ENCODE measurements at regions of chr20 and their contacts with region 1.

Region 1: DNA sequence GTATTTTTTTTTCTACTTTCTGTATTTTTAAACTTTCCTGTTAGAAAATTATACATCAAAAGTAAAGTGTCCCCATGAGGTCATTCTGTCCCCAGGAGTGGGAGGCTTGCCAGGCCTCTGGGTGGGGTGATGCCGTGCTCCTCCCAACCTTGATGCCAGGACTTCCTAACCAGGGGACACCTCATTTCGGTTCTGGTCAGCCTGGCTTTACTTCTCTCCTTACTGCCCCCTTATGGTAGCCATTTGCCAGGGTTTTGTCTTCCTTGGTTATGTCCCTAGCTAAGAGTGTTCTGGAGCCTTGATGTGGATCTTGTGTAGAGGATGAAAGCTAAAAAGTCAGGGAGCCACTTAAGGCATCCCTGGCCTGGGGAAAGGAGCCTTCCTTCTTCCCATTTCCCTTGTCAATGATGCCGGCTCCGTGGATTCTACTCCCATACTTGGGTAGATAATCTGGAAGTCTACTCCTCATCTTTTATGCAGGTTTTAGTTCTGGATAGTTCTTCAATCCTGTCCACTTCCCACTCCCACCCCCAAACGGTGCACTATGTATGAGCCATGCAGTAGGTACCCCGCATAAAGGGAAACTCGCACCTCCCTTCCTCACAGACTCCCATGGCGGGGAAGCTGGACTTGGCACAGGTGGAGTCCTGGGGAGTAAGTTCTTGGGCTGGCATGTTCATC is 164.1 kb upstream of the SALL4 start:
- DNase-seq: peak; percentile 77
- H3K4me3 ChIP-seq: no peak overlapping the region
- H3K27ac ChIP-seq: no peak overlapping the region
- H3K4me1 ChIP-seq: no peaks in the 10 kb centered on the region
- H3K27me3 ChIP-seq: no peaks in the 10 kb centered on the region
- CTCF ChIP-seq: peak; percentile 73 to 74
- POLR2A ChIP-seq: no peak

Region 2: DNA sequence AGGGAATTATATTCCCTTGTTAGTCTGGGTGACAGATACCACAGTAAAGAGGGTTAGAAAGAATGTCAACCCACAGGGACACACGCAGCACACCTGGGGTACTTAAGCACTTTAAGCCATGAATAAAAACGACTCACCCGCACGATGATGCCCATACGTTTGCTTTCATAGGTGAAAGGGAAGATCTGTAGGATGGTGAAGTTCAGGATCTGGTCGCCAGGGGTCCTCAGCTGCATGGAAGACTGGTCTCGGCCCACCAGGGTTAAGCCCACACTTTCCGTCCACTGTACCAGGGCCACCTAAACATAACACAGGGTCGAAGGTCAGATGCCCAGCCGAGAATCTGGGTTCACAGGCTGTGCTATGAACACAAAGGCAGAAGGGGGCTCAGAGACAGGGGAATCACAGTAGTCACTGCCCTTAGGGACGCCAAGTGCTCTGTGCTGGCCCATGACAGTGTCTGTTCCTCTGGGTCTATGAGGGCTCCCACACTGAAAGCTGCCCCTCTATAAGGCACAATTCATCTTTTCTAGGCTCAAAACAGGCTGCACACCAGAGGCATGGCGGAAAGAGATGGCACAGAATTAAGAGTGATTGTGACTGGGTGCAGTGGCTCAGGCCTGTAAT is 327.1 kb before region 1 on chr20:
- CTCF ChIA-PET with region 1: interaction called, 11 read pairs
- POLR2A ChIA-PET with region 1: no interaction called
- dilution Hi-C with region 1: no loop called
- intact Hi-C with region 1: loop called (anchors 1 kb)
- DNase-seq: peak; percentile 84
- H3K4me3 ChIP-seq: no peak overlapping the region
- H3K27ac ChIP-seq: no peak overlapping the region
- H3K4me1 ChIP-seq: peaks cover 3% of the 10 kb centered on the region
- H3K27me3 ChIP-seq: no peaks in the 10 kb centered on the region
- CTCF ChIP-seq: peak; percentile 83 to 88
- POLR2A ChIP-seq: no peak

Region 3: DNA sequence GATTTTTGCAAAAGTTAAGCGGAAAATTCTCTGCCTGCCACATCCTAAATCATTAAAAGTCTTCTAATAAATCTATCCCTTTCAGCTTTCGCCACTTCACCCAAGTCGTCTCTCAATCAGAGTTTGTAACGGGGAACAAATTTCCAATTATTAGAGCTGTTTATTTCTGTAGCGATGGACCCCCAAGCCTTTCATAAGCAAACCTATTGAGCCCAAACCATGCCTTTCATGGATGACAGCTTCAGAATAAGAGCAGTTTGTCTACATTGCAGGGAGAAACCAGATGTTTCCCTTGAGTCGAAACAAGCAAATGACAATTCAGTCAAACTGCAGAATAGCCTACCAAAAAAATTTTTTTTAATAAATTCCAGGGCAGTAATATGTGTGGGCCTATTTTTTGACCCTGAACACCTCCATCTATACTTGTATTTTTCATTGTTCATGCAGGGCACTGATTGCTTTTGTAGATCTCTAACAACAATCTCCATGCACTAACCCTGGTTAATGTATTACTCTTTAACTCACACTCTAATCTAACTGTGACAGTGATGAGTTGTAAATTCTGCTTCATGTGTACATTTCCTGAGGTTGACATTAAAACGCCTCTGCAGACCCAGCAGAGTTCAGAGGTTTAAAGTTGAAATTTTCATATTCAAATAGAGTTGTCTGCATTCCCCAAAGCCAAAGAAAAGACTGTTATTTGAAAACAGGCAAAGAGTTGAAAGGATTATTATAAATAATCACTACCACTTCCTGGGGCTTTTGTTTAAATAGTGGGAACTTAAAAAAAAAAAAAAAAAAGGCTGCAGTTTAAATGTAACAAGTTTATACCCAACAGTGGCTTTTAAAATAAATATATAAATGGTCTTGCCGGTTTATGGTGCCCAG is 262.8 kb before region 1 on chr20:
- CTCF ChIA-PET with region 1: interaction called, 30 read pairs
- POLR2A ChIA-PET with region 1: no interaction called
- dilution Hi-C with region 1: no loop called
- intact Hi-C with region 1: loop called (anchors 5 kb)
- DNase-seq: peak; percentile 28
- H3K4me3 ChIP-seq: no peak overlapping the region
- H3K27ac ChIP-seq: no peak overlapping the region
- H3K4me1 ChIP-seq: no peaks in the 10 kb centered on the region
- H3K27me3 ChIP-seq: no peaks in the 10 kb centered on the region
- CTCF ChIP-seq: no peak
- POLR2A ChIP-seq: no peak

Region 4: GRCh38 chr20:51984931-51985415 is 18.5 kb after region 1 on chr20:
- CTCF ChIA-PET with region 1: interaction called, 19 read pairs
- POLR2A ChIA-PET with region 1: no interaction called
- dilution Hi-C with region 1: no loop called
- intact Hi-C with region 1: no loop called
- DNase-seq: peak; percentile 96
- H3K4me3 ChIP-seq: no peak overlapping the region
- H3K27ac ChIP-seq: peak overlapping the region; percentile 82
- H3K4me1 ChIP-seq: peaks cover 13% of the 10 kb centered on the region
- H3K27me3 ChIP-seq: no peaks in the 10 kb centered on the region
- CTCF ChIP-seq: no peak
- POLR2A ChIP-seq: no peak

Region 5: GRCh38 chr20:52001999-52002666 is 35.7 kb after region 1 on chr20:
- CTCF ChIA-PET with region 1: no interaction called
- POLR2A ChIA-PET with region 1: no interaction called
- dilution Hi-C with region 1: no loop called
- intact Hi-C with region 1: no loop called
- DNase-seq: peak; percentile 93
- H3K4me3 ChIP-seq: no peak overlapping the region
- H3K27ac ChIP-seq: peak overlapping the region; percentile 85
- H3K4me1 ChIP-seq: peaks cover 17% of the 10 kb centered on the region
- H3K27me3 ChIP-seq: no peaks in the 10 kb centered on the region
- CTCF ChIP-seq: peak; percentile 34 to 49
- POLR2A ChIP-seq: no peak

Region 6: DNA sequence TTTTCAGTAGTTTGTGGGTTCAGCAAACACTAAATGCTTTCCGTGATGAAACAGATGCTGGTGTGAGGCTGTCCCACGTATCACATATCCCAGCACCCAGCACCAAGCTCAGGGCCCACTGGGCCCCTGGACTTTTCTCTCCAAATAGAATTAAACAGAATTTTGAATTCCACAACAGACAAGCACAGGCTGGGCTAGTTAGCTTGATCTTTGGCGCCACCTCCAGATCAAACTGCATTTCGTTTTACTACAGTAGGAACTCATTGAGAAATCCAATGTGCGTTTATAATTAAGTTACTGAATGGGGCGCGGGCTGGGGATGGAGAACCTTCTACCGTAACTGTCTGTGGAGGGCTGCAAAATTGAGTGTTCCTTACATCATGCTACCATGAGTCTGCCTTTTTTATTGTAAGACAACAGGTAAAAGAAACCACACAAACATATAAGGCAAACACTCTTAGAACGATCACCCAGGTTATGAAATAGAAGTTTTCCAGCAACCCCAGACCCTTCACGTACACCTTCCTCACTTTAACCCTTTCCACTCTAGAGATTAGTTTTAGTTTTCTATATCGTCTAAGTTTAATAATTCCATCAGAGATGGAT is 117.3 kb after region 1 on chr20:
- CTCF ChIA-PET with region 1: interaction called, 9 read pairs
- POLR2A ChIA-PET with region 1: no interaction called
- dilution Hi-C with region 1: no loop called
- intact Hi-C with region 1: loop called (anchors 5 kb)
- DNase-seq: peak; percentile 75
- H3K4me3 ChIP-seq: no peak overlapping the region
- H3K27ac ChIP-seq: no peak overlapping the region
- H3K4me1 ChIP-seq: no peaks in the 10 kb centered on the region
- H3K27me3 ChIP-seq: no peaks in the 10 kb centered on the region
- CTCF ChIP-seq: peak; percentile 51 to 56
- POLR2A ChIP-seq: no peak

Region 7: DNA sequence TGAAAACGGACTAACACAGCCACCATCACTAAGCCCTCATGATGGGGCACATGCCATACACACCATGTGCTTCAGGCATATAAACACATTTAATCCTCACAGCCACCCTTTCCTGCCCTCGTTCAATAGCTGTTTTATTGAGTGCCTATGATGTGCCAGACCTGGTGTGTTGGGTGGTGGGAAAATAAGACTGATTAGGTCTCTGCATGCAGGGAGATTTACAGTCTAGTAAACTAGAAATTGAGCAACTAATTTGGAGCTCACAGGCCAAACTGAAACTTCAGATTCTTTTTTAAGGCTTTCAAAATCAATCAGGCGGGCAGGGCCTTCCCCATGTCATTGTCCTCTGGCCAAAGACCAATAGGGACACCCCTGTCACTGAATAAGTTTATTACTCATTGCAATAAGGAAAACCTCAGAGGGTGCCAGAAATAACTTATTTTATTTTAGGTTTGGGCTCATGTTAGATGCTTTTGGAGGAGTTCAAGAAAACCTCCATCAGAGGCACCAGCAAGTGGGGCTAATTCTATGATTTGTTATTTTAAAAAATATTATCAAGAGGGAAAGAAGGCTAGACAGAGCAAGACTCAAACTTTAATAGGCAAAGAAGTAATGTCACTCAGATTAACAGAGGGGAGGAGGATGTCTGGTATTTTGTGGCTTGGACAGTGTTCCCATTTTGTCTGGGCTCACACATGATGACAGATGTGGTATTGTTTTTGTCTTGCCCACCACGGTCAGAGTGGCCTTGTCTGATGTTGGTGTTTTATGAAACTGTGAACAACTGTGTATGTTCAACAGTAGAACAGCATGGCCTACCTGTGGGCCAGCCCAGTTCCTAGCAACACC is 213.1 kb after region 1 on chr20:
- CTCF ChIA-PET with region 1: no interaction called
- POLR2A ChIA-PET with region 1: no interaction called
- dilution Hi-C with region 1: no loop called
- intact Hi-C with region 1: no loop called
- DNase-seq: no peak
- H3K4me3 ChIP-seq: no peak overlapping the region
- H3K27ac ChIP-seq: no peak overlapping the region
- H3K4me1 ChIP-seq: no peaks in the 10 kb centered on the region
- H3K27me3 ChIP-seq: no peaks in the 10 kb centered on the region
- CTCF ChIP-seq: no peak
- POLR2A ChIP-seq: no peak